PC-9 (cell line): ENCODE measurements at regions of chr12 and their contacts with region 1.

Region 1: GRCh38 chr12:107702106-107702505 is 16.5 kb downstream of the PWP1 start:
- DNase-seq: no peak
- H3K4me3 ChIP-seq: no peak overlapping the region
- H3K27ac ChIP-seq: no peak overlapping the region
- H3K4me1 ChIP-seq: no peaks in the 10 kb centered on the region
- H3K27me3 ChIP-seq: no peaks in the 10 kb centered on the region
- CTCF ChIP-seq: no peak

Region 2: GRCh38 chr12:107736914-107737313 is 34.8 kb after region 1 on chr12:
- CTCF ChIA-PET with region 1: no interaction called
- POLR2A ChIA-PET with region 1: no interaction called
- intact Hi-C with region 1: loop called (anchors 5 kb)
- DNase-seq: no peak
- H3K4me3 ChIP-seq: no peak overlapping the region
- H3K27ac ChIP-seq: no peak overlapping the region
- H3K4me1 ChIP-seq: peaks cover 1% of the 10 kb centered on the region
- H3K27me3 ChIP-seq: no peaks in the 10 kb centered on the region
- CTCF ChIP-seq: no peak

Region 3: DNA sequence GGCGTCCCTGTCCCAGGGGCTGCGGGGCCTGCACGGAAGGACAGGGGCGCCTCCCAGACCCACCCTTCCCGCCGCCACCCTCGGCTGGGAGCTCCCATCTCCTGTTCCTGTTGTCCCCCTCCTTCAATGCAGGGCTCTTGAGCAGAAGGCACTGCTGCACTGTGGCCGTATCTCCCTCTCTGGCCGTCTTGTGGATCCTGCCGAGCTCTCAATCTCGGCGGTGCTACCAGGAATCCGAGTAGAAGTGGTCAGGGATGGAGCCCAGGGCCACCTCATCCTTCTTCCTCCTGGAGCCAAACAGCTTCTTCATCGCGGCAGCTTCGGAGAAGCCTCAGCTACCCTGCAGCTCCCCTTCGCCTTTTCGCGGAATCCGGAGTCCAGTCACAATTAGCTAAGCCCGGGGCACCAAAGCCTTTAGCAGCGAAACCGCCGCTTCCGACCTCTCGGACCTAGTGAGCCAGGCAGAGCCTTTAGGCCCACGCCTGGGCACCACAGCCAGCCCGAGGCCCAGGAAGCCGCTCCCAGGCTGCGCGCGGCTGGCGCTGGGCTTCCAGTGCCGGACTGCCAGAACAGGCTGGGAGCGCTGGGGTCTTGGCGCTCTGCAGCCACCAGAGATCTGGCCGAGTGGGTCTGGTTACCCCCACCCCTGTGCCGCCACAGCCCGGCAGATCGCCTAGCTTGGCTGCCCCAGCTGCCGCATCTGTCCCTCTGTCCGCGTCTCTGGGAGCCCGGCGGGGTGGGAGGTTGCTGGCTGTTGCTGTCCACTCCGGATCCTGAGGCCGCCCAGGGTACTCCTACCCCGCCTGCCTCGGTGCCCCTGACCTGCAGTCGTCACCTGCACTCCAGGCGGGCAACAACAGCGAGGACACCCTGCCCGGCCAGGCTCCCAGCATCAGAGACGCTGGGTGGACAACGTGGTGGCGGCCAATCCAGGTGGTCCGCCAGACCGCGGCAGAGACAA is 141.5 kb after region 1 on chr12:
- CTCF ChIA-PET with region 1: no interaction called
- POLR2A ChIA-PET with region 1: no interaction called
- intact Hi-C with region 1: no loop called
- DNase-seq: no peak
- H3K4me3 ChIP-seq: no peak overlapping the region
- H3K27ac ChIP-seq: no peak overlapping the region
- H3K4me1 ChIP-seq: no peaks in the 10 kb centered on the region
- H3K27me3 ChIP-seq: peaks cover 37% of the 10 kb centered on the region
- CTCF ChIP-seq: no peak